Activated CD4-positive, alpha-beta T cell treated with anti-CD3 and anti-CD28 coated beads, Interleukin-2, amount 10 ng/mL, durations not matched to agents 24 days and 14 days (primary cell): ENCODE measurements at regions of chr2 and their contacts with region 1.

Region 1: DNA sequence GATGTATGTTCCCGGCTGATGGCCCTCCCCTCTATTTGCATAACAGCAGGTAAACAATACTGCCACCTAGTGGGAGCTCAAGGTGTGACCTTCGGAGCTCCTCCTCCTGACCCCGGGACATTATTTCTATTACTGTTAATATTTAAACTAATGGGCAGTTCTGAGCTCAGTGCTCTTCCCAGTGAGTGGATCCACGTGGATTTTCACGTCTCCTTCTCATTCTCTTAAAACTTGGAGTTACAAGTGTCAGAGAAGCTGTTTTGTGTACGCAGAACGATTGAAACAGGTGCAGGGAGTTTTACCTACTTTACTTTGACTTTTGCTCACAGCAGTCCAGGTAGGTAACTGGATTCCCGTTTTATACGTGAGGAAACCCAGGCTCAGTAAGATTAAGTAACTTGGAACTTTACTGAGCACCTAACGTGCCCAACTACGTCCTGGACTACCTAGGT is 127.3 kb downstream of the PRKCE start:
- DNase-seq: peak; percentile 89
- H3K4me3 Mint-ChIP-seq: no peak overlapping the region
- H3K27ac Mint-ChIP-seq: no peak overlapping the region
- H3K4me1 Mint-ChIP-seq: peaks cover 13% of the 10 kb centered on the region
- H3K27me3 Mint-ChIP-seq: no peaks in the 10 kb centered on the region

Region 2: DNA sequence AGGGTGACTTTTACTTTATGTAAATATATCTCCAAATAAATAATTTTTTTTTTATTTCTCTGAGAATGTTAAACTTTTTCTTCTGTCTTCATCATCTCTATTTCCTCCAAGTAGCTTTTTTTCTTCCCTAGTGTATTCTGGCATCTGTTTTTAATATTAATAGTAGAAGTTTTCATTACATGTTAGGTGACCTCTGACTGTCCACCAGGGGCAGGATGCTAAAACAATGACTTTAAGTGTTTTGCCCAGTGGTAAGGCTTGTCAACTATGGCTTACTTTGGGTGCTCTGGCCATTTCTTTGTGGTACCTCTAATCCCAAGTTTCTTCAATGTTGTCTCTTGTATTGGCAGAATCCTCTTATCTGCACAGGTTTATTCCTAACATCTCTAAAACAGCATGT is 294.7 kb before region 1 on chr2:
- intact Hi-C with region 1: no loop called
- DNase-seq: no peak
- H3K4me3 Mint-ChIP-seq: no peak overlapping the region
- H3K27ac Mint-ChIP-seq: no peak overlapping the region
- H3K4me1 Mint-ChIP-seq: peaks cover 6% of the 10 kb centered on the region
- H3K27me3 Mint-ChIP-seq: no peaks in the 10 kb centered on the region

Region 3: GRCh38 chr2:45681675-45682074 is 97.1 kb before region 1 on chr2:
- intact Hi-C with region 1: no loop called
- DNase-seq: no peak
- H3K4me3 Mint-ChIP-seq: no peak overlapping the region
- H3K27ac Mint-ChIP-seq: no peak overlapping the region
- H3K4me1 Mint-ChIP-seq: no peaks in the 10 kb centered on the region
- H3K27me3 Mint-ChIP-seq: no peaks in the 10 kb centered on the region

Region 4: DNA sequence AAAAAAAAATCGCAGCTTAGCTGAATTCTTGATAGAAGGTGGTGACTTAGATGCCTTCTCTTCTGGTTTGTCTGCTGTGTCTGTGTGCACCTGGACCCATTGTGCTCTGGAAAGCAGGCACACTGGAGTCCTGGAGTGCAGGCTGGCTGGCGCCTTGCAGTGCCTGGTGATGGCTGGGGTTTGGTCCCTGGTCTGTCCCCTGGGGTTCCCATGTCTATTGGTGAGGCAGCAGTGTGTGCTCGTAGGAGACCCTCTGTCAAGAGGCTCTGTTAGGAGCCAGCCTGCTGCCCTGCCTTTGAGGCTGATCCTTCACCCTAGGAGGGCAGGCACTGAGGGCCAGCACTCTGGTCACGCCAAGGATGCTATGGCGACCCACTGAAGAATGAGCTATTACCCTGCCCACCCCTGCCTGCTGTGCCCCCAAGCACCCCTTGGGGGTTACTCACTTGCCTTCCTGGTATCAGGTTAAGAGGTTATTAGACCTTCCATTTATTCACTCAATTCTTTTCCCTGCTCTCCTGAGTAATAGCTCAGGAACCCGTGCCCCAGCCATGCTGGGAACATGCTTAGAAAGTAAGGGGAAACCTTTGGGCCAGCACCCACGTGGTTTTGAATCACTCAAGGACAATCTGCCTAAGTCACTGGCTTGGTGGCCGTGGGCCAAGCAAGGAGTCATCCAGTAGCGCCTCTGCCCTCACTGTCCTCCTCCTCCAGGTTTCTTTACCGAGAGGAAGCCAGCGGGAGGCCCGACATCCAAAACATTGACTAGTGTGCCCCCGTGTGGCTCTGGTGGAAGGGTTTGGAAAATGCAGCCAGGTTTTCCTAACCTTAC is 157.3 kb after region 1 on chr2:
- intact Hi-C with region 1: loop called (anchors 1 kb)
- DNase-seq: peak; percentile 86
- H3K4me3 Mint-ChIP-seq: no peak overlapping the region
- H3K27ac Mint-ChIP-seq: no peak overlapping the region
- H3K4me1 Mint-ChIP-seq: peaks cover 2% of the 10 kb centered on the region
- H3K27me3 Mint-ChIP-seq: no peaks in the 10 kb centered on the region

Region 5: GRCh38 chr2:46187112-46187618 is 408.4 kb after region 1 on chr2:
- intact Hi-C with region 1: no loop called
- DNase-seq: peak; percentile 84
- H3K4me3 Mint-ChIP-seq: peak overlapping the region; percentile 80
- H3K27ac Mint-ChIP-seq: peak overlapping the region; percentile 88
- H3K4me1 Mint-ChIP-seq: peaks cover 13% of the 10 kb centered on the region
- H3K27me3 Mint-ChIP-seq: peaks cover 2% of the 10 kb centered on the region

Region 6: DNA sequence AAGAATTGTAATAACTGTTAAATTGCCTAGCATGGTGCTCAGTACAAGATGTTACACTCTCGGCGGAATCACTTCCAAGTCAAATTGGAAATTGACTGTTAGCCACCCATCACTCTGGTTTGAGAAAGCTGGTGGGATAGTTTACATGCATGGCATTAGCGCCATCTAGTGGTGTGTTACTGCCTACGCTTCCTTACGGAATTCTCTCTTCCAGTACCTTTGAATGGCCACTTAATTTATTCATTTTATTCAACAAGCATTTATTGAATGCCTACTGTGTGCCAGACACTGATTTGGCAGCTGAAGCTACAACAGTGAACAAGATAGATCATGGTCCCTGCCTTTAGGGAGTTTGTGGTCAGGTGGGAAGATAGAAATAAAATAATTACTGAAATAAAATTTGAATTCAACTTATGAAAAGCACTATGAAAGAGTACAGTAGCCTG is 871.8 kb after region 1 on chr2:
- intact Hi-C with region 1: no loop called
- DNase-seq: peak; percentile 90
- H3K4me3 Mint-ChIP-seq: no peak overlapping the region
- H3K27ac Mint-ChIP-seq: no peak overlapping the region
- H3K4me1 Mint-ChIP-seq: no peaks in the 10 kb centered on the region
- H3K27me3 Mint-ChIP-seq: peaks cover 26% of the 10 kb centered on the region